ENCODE measurements at regions of chr16 and their contacts with region 1.

Region 1: GRCh38 chr16:15553313-15554088 is 89.5 kb downstream of the MARF1 start:
- DNase-seq: no peak
- ATAC-seq: no peak
- H3K4me3 ChIP-seq: no peak overlapping the region
- H3K27ac ChIP-seq: no peak overlapping the region
- H3K4me1 ChIP-seq: no peaks in the 10 kb centered on the region
- H3K27me3 ChIP-seq: no peaks in the 10 kb centered on the region

Region 2: DNA sequence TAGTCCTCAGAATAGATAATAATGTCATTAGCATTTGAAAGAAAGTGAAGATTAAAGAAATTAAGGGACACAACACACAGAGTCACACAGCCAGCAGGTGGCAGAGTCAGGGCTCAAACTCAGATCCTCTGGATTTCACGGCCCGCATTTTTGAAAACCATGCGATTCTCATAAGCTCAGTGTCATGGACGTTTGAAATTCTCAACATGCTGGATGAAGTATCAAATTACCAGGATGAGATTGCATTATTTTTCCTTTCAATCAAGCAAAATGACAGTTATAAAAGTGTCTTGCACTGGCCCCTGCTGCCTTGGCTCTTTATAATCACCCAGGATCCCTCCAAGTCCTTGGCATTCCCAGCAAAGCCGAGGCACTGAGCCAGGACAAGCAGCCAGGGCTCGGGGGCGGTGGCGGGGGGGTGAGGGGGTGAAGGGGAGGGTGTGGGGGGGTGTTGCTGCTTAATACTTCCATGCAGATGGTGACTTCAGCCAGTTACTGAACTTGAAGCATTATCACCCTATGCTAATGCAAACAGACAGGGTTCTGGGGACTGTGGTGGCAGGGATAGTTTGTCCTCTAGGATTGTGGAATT is 125.8 kb before region 1 on chr16:
- intact Hi-C with region 1: loop called in 1 of 4 experiments (anchors 5 kb)
- DNase-seq: peak; percentile 78 to 89 (median 88)
- ATAC-seq: peak; percentile 91
- H3K4me3 ChIP-seq: peak overlapping the region; percentile 38
- H3K27ac ChIP-seq: no peak overlapping the region
- H3K4me1 ChIP-seq: no peaks in the 10 kb centered on the region
- H3K27me3 ChIP-seq: no peaks in the 10 kb centered on the region

Region 3: GRCh38 chr16:15482068-15482747 is 71.3 kb before region 1 on chr16:
- intact Hi-C with region 1: no loop called
- DNase-seq: peak in 2 of 3 donors; percentile 24 to 61
- ATAC-seq: peak; percentile 72 to 92
- H3K4me3 ChIP-seq: no peak overlapping the region
- H3K27ac ChIP-seq: no peak overlapping the region
- H3K4me1 ChIP-seq: peaks cover 2% of the 10 kb centered on the region
- H3K27me3 ChIP-seq: no peaks in the 10 kb centered on the region

Region 4: GRCh38 chr16:15636392-15636873 is 82.9 kb after region 1 on chr16:
- intact Hi-C with region 1: no loop called
- DNase-seq: no peak
- ATAC-seq: no peak
- H3K4me3 ChIP-seq: no peak overlapping the region
- H3K27ac ChIP-seq: no peak overlapping the region
- H3K4me1 ChIP-seq: no peaks in the 10 kb centered on the region
- H3K27me3 ChIP-seq: no peaks in the 10 kb centered on the region

Measured in right cardiac atrium (tissue), 5 donors.